Activated CD4-positive, alpha-beta memory T cell treated with anti-CD3 and anti-CD28 coated beads for 36 hours (primary cell): ENCODE measurements at regions of chr1 and their contacts with region 1.

Region 1: DNA sequence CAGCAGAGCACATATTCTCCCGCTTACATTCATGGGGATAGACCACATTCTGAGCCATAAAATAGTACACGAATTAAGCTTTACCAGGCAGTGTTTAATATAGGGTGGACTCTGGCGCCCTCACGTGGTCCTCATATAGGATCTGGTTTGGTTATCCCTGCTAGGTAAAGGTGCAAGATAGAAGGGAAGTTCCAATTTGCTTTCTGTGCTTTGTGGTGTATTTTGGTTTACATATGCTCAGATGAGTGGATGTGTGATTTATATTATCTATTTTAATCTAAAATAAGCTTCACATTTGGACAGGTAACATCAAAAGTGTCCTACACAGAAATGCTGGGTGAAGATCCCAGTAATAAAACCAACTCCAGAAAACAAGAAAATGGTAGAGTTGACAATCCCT is 3.6 kb downstream of the CR1 start:
- DNase-seq: peak; percentile 80
- H3K4me3 Mint-ChIP-seq: no peak overlapping the region
- H3K27ac Mint-ChIP-seq: no peak overlapping the region
- H3K4me1 Mint-ChIP-seq: peaks cover 22% of the 10 kb centered on the region
- H3K27me3 Mint-ChIP-seq: peaks cover 48% of the 10 kb centered on the region

Region 2: GRCh38 chr1:206982216-206982615 is 517.4 kb before region 1 on chr1:
- CTCF ChIA-PET with region 1: interaction called, 13 read pairs
- POLR2A ChIA-PET with region 1: no interaction called
- intact Hi-C with region 1: no loop called
- DNase-seq: peak; percentile 72
- H3K4me3 Mint-ChIP-seq: no peak overlapping the region
- H3K27ac Mint-ChIP-seq: no peak overlapping the region
- H3K4me1 Mint-ChIP-seq: no peaks in the 10 kb centered on the region
- H3K27me3 Mint-ChIP-seq: peaks cover 15% of the 10 kb centered on the region

Region 3: DNA sequence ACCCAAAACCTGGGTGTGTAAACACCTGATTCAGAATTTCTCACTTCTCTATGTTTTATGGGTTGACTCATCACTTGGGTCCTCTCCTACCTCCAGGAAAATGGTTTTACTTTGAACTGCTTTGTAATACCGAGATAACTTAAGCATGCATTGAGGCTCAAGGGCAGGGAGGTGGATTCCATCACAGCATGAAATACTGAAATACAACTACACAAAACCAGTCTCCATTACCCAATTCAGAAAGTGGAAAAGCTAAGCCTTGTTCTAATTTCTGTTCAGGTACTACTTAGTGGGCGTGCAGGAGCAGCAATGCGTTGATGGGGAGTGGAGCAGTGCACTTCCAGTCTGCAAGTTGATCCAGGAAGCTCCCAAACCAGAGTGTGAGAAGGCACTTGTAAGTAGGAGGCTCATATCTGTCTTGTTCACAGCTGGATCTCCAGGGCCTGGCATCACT is 401.7 kb before region 1 on chr1:
- CTCF ChIA-PET with region 1: interaction called, 7 read pairs
- POLR2A ChIA-PET with region 1: no interaction called
- intact Hi-C with region 1: loop called (anchors 1 kb)
- DNase-seq: peak; percentile 64
- H3K4me3 Mint-ChIP-seq: no peak overlapping the region
- H3K27ac Mint-ChIP-seq: peak overlapping the region; percentile 78
- H3K4me1 Mint-ChIP-seq: peaks cover 14% of the 10 kb centered on the region
- H3K27me3 Mint-ChIP-seq: peaks cover 24% of the 10 kb centered on the region

Region 4: GRCh38 chr1:207336559-207337467 is 162.8 kb before region 1 on chr1:
- CTCF ChIA-PET with region 1: interaction called, 14 read pairs
- POLR2A ChIA-PET with region 1: no interaction called
- intact Hi-C with region 1: loop called (anchors 2 kb)
- DNase-seq: peak; percentile 39
- H3K4me3 Mint-ChIP-seq: no peak overlapping the region
- H3K27ac Mint-ChIP-seq: peak overlapping the region; percentile 86
- H3K4me1 Mint-ChIP-seq: peaks cover 58% of the 10 kb centered on the region
- H3K27me3 Mint-ChIP-seq: no peaks in the 10 kb centered on the region

Region 5: DNA sequence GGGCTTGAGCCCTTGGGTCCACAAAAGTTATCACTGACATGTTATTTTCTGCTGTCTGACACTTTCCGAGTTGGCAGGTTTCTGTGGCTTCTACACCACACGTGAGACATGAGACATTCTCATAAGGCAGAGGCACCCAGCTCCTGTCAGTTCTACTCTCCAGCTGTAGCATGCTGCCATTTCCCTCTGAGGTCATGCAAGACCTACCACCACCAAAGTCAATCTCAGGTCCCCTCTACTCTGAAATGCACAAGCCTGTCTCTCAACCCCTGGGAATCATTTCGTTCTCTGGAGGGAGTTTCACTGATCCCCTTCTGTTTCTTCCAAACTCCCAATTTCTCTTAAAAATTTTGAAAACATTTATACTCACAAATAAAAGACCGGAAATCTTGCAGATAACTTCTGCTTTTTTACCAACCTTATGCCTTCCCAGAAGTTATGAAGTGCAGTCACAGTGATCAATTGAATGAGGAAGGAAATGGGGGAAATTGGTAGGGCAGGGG is 84.9 kb before region 1 on chr1:
- CTCF ChIA-PET with region 1: interaction called, 14 read pairs
- POLR2A ChIA-PET with region 1: no interaction called
- intact Hi-C with region 1: loop called (anchors 1 kb)
- DNase-seq: peak; percentile 63
- H3K4me3 Mint-ChIP-seq: no peak overlapping the region
- H3K27ac Mint-ChIP-seq: no peak overlapping the region
- H3K4me1 Mint-ChIP-seq: peaks cover 25% of the 10 kb centered on the region
- H3K27me3 Mint-ChIP-seq: peaks cover 3% of the 10 kb centered on the region